HCT116 (cell line): ENCODE measurements at regions of chr6 and their contacts with region 1.

Region 1: DNA sequence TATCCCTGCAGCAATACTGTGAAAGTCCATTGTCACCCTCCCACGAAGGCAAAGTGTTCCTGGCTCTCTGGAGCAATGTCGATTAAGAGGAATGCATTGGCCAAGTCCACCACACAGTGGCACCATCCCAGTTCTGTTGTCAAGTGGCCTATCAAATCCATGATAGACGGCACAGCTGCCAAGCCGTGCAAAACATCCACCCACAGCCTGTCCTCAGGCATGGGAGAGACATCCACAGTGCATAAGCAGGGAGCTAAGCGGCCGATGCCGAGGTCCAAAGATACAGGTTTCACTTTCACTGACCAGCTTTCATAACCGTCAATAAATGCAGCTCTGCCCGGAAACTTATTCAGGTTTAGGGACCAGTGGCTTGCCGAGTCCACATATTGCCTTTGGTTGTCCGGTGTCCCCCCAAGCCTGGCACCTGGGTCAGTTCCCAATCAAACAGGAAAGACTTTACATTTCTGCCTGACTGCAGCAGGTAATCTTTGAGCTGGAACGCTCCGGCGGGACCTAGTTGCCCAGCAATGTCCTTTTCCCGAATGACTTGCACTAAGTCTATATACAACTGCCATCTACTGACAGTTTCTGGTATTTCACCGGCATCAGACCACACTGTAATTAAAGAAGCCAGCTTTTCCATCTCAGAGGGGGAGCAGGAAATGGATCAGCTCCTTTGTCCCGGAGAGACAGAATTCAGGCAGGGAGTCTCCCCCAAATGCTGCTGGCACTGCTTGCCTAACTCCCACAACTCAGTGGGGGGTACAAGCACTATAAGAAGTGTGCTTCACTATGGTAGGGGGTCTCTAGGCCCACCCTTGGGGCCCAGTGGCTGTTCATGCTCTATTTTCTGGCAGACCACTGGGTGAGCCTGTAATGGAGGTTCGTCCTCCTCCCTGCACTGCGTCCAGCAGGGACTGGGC is 6.3 kb downstream of the ZKSCAN3 start:
- DNase-seq: peak; percentile 72
- ATAC-seq: peak; percentile 72
- H3K4me3 ChIP-seq: peak overlapping the region; percentile 46 to 63
- H3K27ac ChIP-seq: peak overlapping the region; percentile 85
- H3K4me1 ChIP-seq: peaks cover 39 to 56% of the 10 kb centered on the region in 2 experiments
- H3K27me3 ChIP-seq: no peaks in the 10 kb centered on the region
- CTCF ChIP-seq: peak; percentile 60 to 69 (median 62)
- POLR2A ChIP-seq: no peak
- RAD21 ChIP-seq: peak; percentile 84

Region 2: DNA sequence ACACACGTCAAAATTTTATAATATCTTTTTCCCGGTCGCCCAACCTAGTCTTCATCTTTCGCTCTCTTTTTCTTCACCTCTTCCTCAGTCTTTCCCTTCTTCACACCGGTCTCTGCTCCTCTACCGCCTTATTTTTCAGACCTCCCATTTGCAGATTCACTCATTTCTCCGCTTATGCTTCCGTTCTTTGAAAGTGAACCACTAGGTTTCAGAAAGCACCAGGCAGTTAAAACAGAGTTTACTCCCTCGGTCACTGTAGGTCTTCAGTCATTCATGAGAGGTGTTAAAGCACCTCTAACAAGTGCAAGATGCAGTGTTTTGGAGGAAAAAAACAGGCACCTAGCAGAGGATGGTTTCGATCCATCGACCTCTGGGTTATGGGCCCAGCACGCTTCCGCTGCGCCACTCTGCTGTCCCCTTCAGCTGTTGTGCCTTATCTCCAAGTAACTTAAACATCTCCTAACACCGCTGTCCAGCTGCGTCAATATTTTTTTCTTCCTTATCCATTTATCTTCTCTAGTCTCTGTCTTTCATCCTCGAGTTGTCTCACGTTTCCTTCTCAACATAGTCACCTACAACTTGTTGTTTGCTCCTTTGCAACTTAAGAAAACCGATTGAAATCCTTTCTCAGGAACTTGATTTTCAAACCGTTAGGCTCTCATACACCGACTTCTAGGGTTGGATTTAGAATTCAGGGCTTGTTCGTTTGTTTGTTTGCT is 763.4 kb before region 1 on chr6:
- CTCF ChIA-PET with region 1: no interaction called
- POLR2A ChIA-PET with region 1: no interaction called
- RAD21 ChIA-PET with region 1: no interaction called
- intact Hi-C with region 1: no loop called
- DNase-seq: no peak
- ATAC-seq: peak; percentile 88
- H3K4me3 ChIP-seq: no peak overlapping the region
- H3K27ac ChIP-seq: no peak overlapping the region
- H3K4me1 ChIP-seq: peaks cover 7 to 30% of the 10 kb centered on the region in 2 experiments
- H3K27me3 ChIP-seq: no peaks in the 10 kb centered on the region
- CTCF ChIP-seq: no peak
- POLR2A ChIP-seq: no peak
- RAD21 ChIP-seq: peak; percentile 8; the same call in 1 of the 2 replicates

Region 3: GRCh38 chr6:27902335-27903314 is 453.4 kb before region 1 on chr6:
- CTCF ChIA-PET with region 1: interaction called, 3 read pairs
- POLR2A ChIA-PET with region 1: interaction called, 3 read pairs
- RAD21 ChIA-PET with region 1: no interaction called
- intact Hi-C with region 1: loop called (anchors 10 kb)
- DNase-seq: peak; percentile 75
- ATAC-seq: peak; percentile 88
- H3K4me3 ChIP-seq: peak overlapping the region; percentile 40 to 55
- H3K27ac ChIP-seq: peak overlapping the region; percentile 76
- H3K4me1 ChIP-seq: peaks cover 6 to 34% of the 10 kb centered on the region in 2 experiments
- H3K27me3 ChIP-seq: no peaks in the 10 kb centered on the region
- CTCF ChIP-seq: no peak
- POLR2A ChIP-seq: no peak
- RAD21 ChIP-seq: 0 out of 2 replicates have a peak, but pooled peaks have one; percentile 11

Region 4: GRCh38 chr6:28212510-28213212 is 143.3 kb before region 1 on chr6:
- CTCF ChIA-PET with region 1: no interaction called
- POLR2A ChIA-PET with region 1: no interaction called
- RAD21 ChIA-PET with region 1: no interaction called
- intact Hi-C with region 1: no loop called
- DNase-seq: peak; percentile 80
- ATAC-seq: peak; percentile 88
- H3K4me3 ChIP-seq: peak overlapping the region; percentile 47 to 53
- H3K27ac ChIP-seq: peak overlapping the region; percentile 38
- H3K4me1 ChIP-seq: peaks cover 5 to 15% of the 10 kb centered on the region in 2 experiments; a peak in 3 of 4 replicates
- H3K27me3 ChIP-seq: no peaks in the 10 kb centered on the region
- CTCF ChIP-seq: peak in 2 of 3 experiments; percentile 19 to 38; a peak in 2 of 6 replicates
- POLR2A ChIP-seq: no peak
- RAD21 ChIP-seq: peak; percentile 62

Region 5: GRCh38 chr6:28252009-28252975 is 103.7 kb before region 1 on chr6 and contains the start of gene ZKSCAN4:
- CTCF ChIA-PET with region 1: interaction called, 9 read pairs
- POLR2A ChIA-PET with region 1: interaction called, 4 read pairs
- RAD21 ChIA-PET with region 1: interaction called, 4 read pairs
- intact Hi-C with region 1: loop called (anchors 1 kb)
- DNase-seq: peak; percentile 90
- ATAC-seq: peak; percentile 95
- H3K4me3 ChIP-seq: peak within 1 kb of the TSS; percentile 97 to 98
- H3K27ac ChIP-seq: peak within 1 kb of the TSS; percentile 44
- H3K4me1 ChIP-seq: peaks cover 7 to 15% of the 10 kb centered on the region in 2 experiments; a peak in 3 of 4 replicates
- H3K27me3 ChIP-seq: no peaks in the 10 kb centered on the region
- CTCF ChIP-seq: no peak
- POLR2A ChIP-seq: peak; percentile 17
- RAD21 ChIP-seq: peak; percentile 17; the same call in 1 of the 2 replicates
- total RNA-seq, gene ZKSCAN4: 4.8 TPM

Region 6: GRCh38 chr6:28383235-28384142 is 27.5 kb after region 1 on chr6:
- CTCF ChIA-PET with region 1: interaction called, 20 read pairs
- POLR2A ChIA-PET with region 1: interaction called, 14 read pairs
- RAD21 ChIA-PET with region 1: no interaction called
- intact Hi-C with region 1: no loop called
- DNase-seq: peak; percentile 82
- ATAC-seq: peak; percentile 93
- H3K4me3 ChIP-seq: peak overlapping the region; percentile 49 to 55
- H3K27ac ChIP-seq: peak overlapping the region; percentile 73
- H3K4me1 ChIP-seq: peaks cover 7 to 17% of the 10 kb centered on the region in 2 experiments; a peak in 3 of 4 replicates
- H3K27me3 ChIP-seq: no peaks in the 10 kb centered on the region
- CTCF ChIP-seq: peak; percentile 41 to 69 (median 69); a peak in 5 of 6 replicates
- POLR2A ChIP-seq: peak; percentile 62
- RAD21 ChIP-seq: peak; percentile 74

Region 7: DNA sequence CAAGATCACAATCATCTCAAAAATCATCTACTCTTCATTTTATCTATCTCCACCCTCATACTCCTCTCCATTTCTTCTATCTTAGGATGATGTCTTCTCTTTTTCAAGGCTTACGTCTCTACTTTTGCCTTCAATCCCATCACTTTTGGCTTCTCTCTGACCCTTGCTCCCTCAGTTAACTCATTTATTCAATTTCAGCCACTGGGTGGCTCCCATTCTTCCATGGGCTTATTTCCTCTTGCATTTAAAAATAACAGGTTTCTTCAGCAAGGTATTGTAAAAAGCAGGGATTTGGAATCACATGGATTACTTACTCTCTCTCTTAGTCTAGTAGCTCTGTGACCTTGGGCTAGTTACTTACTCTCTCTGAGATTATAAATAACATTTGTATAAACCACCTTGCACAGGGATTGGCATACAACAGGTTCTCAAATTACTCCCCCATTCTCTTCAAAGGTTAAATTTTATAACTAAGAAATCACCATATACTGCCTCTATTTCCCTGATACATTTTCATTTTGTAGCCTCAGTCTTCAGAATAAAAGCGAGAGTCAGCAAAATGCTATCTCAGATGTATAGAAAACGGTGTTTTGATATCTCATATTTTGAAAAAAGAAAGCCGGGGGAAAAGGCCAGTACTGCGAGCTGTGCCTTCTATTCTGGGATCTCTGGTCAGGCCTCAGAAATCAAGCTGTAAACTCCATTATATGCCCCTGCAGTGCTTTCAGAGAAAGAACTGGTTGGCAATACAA is 38.1 kb after region 1 on chr6:
- CTCF ChIA-PET with region 1: no interaction called
- POLR2A ChIA-PET with region 1: no interaction called
- RAD21 ChIA-PET with region 1: no interaction called
- intact Hi-C with region 1: no loop called
- DNase-seq: no peak
- ATAC-seq: peak; percentile 58
- H3K4me3 ChIP-seq: no peak overlapping the region
- H3K27ac ChIP-seq: no peak overlapping the region
- H3K4me1 ChIP-seq: peaks cover 0 to 14% of the 10 kb centered on the region in 2 experiments; a peak in 2 of 4 replicates
- H3K27me3 ChIP-seq: no peaks in the 10 kb centered on the region
- CTCF ChIP-seq: peak; percentile 29 to 48 (median 36); a peak in 4 of 6 replicates
- POLR2A ChIP-seq: no peak
- RAD21 ChIP-seq: peak; percentile 51

Region 8: DNA sequence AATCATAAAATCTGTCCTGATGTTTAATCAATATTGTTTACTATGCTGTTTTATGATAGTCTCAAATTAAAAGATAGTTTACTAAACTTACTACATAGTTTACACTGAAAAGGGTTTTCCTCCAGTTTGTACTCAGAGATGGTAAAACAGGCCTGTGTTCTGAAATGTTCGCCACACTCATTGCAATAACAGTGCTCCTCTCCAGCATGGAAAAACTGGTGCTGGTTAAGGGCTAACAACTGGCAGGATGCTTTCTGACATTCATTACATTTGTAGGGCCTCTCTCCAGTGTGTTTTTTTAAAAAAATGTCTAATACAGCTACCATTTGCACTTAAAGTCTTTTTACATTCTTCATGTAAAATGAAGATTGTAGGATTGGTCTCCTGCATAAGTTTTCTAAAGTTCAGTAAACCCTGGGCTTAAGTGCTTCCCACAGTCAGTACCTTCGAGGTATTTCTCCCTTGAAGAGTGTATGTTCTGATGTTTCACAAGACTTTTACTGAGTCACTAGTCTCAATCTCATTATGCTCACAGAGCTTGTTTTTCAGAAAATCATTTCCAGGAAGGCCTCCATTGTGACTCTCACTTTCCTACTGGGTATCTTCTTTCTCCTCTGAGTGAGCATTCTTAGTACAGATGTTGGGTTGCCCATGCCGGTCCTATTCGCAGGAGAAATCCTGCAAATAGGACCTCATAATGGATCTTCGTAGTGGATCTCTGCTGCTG is 52.2 kb after region 1 on chr6:
- CTCF ChIA-PET with region 1: no interaction called
- POLR2A ChIA-PET with region 1: no interaction called
- RAD21 ChIA-PET with region 1: no interaction called
- intact Hi-C with region 1: no loop called
- DNase-seq: no peak
- ATAC-seq: no peak
- H3K4me3 ChIP-seq: no peak overlapping the region
- H3K27ac ChIP-seq: no peak overlapping the region
- H3K4me1 ChIP-seq: no peaks in the 10 kb centered on the region
- H3K27me3 ChIP-seq: no peaks in the 10 kb centered on the region
- CTCF ChIP-seq: no peak
- POLR2A ChIP-seq: no peak
- RAD21 ChIP-seq: no peak